MCF 10A (cell line): ENCODE measurements at regions of chr2 and their contacts with region 1.

Region 1: GRCh38 chr2:203730076-203730729 is 23.8 kb downstream of the CD28 start:
- DNase-seq: peak; percentile 43
- H3K4me3 Mint-ChIP-seq: peak overlapping the region; percentile 13
- H3K27ac Mint-ChIP-seq: peak overlapping the region; percentile 92
- H3K4me1 Mint-ChIP-seq: peaks cover 26% of the 10 kb centered on the region
- H3K27me3 Mint-ChIP-seq: no peaks in the 10 kb centered on the region
- CTCF ChIP-seq: no peak

Region 2: GRCh38 chr2:203427061-203427460 is 303.1 kb before region 1 on chr2:
- CTCF ChIA-PET with region 1: no interaction called
- POLR2A ChIA-PET with region 1: no interaction called
- intact Hi-C with region 1: no loop called
- DNase-seq: no peak
- H3K4me3 Mint-ChIP-seq: no peak overlapping the region
- H3K27ac Mint-ChIP-seq: no peak overlapping the region
- H3K4me1 Mint-ChIP-seq: no peaks in the 10 kb centered on the region
- H3K27me3 Mint-ChIP-seq: no peaks in the 10 kb centered on the region
- CTCF ChIP-seq: no peak

Region 3: DNA sequence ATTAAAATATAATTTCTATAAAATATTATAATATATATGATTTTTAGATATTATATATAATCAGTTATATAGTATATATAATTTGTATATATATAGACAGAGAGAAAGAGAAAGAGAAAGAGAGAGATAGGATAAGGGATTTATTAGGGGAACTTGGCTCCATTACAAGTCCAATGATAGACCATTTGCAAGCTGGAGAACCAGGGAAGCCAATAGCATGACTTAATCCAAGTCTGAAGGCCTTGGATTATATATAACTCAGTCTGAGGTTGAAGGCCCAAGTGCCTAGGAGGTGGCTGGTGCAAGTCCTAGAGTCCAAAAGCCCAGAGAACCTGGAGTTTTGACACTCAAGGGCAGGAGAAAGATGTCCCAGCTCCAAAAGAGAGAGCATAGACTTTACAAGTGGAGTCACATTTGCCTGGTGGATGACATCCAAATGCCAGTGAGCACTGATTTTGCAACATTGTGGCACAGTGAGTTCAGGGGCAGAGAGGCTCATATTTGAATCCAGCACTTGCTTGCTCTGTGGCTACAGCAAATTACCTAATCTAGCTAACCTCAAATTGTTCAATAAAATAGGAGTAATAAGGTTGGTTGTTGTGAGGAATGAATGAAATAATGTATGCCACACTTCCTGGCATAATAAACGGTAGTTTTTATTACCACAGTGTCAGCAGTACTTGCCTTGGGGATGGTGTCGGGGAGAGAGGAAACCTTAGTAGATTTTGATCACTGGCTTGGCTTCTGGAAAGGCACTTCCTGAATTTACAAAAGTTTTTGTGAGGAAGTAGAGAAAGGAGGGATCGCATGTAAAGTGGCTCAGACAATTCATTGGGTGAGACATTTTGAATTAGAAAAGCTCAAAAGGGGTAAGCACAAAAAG is 93.4 kb before region 1 on chr2:
- CTCF ChIA-PET with region 1: no interaction called
- POLR2A ChIA-PET with region 1: no interaction called
- intact Hi-C with region 1: no loop called
- DNase-seq: peak; percentile 64
- H3K4me3 Mint-ChIP-seq: no peak overlapping the region
- H3K27ac Mint-ChIP-seq: peak overlapping the region; percentile 49
- H3K4me1 Mint-ChIP-seq: peaks cover 13% of the 10 kb centered on the region
- H3K27me3 Mint-ChIP-seq: no peaks in the 10 kb centered on the region
- CTCF ChIP-seq: no peak

Region 4: DNA sequence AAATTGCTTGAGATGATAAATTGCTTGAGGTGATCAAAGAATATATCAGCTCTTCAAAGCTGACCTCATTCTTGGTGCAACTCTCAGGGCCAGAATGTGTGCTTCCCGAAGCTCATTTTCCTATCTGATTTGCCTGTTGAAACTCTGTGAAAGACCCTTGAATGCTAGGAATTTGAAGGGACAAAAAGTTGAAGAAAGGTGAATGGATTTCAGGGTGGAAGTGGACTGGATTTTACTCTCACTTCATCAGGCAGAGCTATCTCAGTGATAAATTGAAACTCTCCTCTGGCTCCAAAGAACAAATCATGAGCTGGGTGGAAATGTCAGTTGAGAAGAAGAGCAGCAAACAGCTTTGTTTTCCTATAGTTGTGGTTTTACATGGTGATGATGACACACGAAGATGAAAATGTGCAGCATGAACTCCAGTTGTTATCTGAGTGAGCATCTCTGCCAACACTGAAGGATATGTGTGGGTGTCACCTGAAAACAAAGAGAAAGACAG is 10.6 kb after region 1 on chr2:
- CTCF ChIA-PET with region 1: interaction called, 5 read pairs
- POLR2A ChIA-PET with region 1: interaction called, 14 read pairs
- intact Hi-C with region 1: no loop called
- DNase-seq: peak; percentile 30
- H3K4me3 Mint-ChIP-seq: no peak overlapping the region
- H3K27ac Mint-ChIP-seq: peak overlapping the region; percentile 36
- H3K4me1 Mint-ChIP-seq: peaks cover 40% of the 10 kb centered on the region
- H3K27me3 Mint-ChIP-seq: no peaks in the 10 kb centered on the region
- CTCF ChIP-seq: no peak